ENCODE measurements at regions of chr22 and their contacts with region 1.

Region 1: DNA sequence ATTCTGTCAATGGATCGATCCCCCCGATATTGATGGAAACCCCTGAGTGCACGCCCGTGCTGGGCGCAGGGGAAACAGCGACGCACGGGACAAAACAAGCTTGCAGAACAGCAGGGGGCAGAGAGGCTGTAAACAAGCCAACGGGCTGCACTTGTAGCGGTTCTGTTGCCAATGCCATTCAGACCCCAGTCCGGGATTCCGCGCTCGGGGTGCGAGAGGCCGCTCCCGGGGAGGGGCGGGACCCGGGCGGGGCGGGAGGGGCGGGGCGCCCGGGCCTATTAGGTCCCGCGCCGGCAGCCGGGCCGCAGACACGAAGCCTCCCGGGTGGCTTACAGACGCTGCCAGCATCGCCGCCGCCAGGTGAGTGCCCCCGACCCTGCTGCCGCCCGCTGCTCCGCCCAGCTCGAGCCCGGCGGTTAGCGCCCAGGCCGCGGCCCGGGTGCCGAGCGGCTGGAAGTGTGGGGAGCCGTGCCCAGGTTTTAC is at the start of gene BIK:
- DNase-seq: no peak
- H3K4me3 ChIP-seq: peak within 1 kb of the TSS; percentile 52
- H3K27ac ChIP-seq: no peak within 1 kb of the TSS
- H3K27me3 ChIP-seq: peaks cover 62% of the 10 kb centered on the region
- CTCF ChIP-seq: peak; percentile 37
- polyA plus RNA-seq, gene BIK: not detected in 2 replicates

Region 2: GRCh38 chr22:43159484-43160178 is 49.1 kb after region 1 on chr22:
- CTCF ChIA-PET with region 1: no interaction called
- POLR2A ChIA-PET with region 1: interaction called, 13 read pairs
- DNase-seq: no peak
- H3K4me3 ChIP-seq: no peak overlapping the region
- H3K27ac ChIP-seq: no peak overlapping the region
- H3K27me3 ChIP-seq: no peaks in the 10 kb centered on the region
- CTCF ChIP-seq: peak; percentile 17; the same call in 1 of the 2 replicates

Measured in AG04450 (cell line).